KBM-7 (cell line): ENCODE measurements at regions of chr17 and their contacts with region 1.

Region 1: GRCh38 chr17:55735731-55736405 is 13.2 kb upstream of the TMEM100 start:
- DNase-seq: peak; percentile 51

Region 2: GRCh38 chr17:55580596-55581133 is 155.2 kb before region 1 on chr17:
- in situ Hi-C with region 1: no loop called
- DNase-seq: no peak

Region 3: DNA sequence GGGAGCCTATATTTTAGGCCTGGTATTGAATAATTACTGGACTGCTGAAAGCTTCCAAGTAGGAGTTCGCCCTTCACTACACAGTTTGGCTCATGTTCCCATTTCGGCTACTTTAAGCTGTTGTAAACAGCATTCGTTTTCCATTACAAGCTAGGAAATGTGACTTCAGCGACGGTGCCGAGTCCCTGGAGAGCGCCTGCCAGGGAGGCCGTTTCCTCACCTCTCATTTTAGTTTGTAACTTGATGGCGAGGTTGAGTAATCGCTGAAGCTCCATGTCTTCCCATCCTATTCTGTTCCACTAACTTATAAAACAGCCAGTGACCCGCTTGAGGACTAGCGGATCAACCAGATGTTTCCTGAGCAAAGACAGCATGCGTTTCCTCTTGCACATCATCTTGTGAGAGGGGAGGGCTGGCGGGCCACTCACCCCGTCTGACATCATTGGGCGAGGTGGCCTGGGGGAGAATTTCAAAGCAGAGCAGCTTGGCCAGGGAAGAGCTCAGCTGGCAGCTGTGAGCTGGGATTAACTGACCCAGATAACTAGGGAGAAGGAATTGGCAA is 47.9 kb after region 1 on chr17:
- in situ Hi-C with region 1: no loop called
- DNase-seq: peak; percentile 93

Region 4: GRCh38 chr17:55816532-55817396 is 80.9 kb after region 1 on chr17:
- in situ Hi-C with region 1: no loop called
- DNase-seq: peak; percentile 62

Region 5: GRCh38 chr17:55845385-55845784 is 109.5 kb after region 1 on chr17:
- in situ Hi-C with region 1: loop called (anchors 25 kb)
- DNase-seq: peak; percentile 26